Breast epithelium (tissue), 4 donors: ENCODE measurements at regions of chrX and their contacts with region 1.

Region 1: DNA sequence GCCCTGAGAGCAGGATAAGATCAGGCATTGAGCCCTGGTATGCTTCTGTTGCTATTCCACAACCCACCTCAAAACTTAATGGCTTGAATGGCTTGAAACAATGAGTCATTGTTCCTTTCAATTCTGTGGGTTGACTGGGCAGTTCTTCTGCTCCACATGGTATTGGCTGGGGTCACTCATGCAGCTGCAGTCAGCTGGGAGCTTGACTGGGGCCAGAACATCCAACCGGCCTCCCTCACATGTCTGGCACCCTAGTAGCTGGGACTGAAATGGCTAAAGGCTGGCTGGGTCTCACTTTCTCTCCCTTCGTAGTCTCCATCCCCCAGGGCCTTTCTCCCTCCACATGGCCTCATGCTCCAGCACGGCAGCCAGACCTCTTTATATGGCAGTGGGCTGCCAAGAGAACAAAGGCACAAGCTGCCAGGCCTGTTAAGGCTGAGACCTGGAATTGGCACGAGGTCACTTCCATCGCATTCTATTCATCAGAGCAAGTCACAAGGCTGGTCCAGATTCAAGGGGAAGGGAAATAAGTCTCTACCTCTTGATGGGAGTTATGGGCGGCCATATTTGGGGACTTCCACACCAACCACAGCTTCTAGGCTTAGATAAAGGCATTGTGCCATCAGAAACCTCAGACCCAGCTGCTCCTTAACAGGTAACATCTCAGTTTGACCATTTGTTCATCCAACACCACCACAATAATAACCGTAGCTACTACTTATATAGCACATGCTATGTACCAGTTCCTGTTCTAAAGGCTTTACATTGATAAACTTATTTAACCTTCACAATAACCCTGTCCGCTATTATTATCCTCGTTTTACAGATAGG is 159.7 kb upstream of the ATP6AP2 start:
- DNase-seq: peak in 1 of 2 donors; percentile 61
- H3K4me3 ChIP-seq: no peak overlapping the region
- H3K27ac ChIP-seq: peak overlapping the region; percentile 66 to 76
- H3K4me1 ChIP-seq: no peaks in the 10 kb centered on the region
- H3K27me3 ChIP-seq: peaks cover 0 to 35% of the 10 kb centered on the region in 2 donors
- CTCF ChIP-seq: peak in 1 of 3 donors; percentile 11
- POLR2A ChIP-seq: no peak

Region 2: DNA sequence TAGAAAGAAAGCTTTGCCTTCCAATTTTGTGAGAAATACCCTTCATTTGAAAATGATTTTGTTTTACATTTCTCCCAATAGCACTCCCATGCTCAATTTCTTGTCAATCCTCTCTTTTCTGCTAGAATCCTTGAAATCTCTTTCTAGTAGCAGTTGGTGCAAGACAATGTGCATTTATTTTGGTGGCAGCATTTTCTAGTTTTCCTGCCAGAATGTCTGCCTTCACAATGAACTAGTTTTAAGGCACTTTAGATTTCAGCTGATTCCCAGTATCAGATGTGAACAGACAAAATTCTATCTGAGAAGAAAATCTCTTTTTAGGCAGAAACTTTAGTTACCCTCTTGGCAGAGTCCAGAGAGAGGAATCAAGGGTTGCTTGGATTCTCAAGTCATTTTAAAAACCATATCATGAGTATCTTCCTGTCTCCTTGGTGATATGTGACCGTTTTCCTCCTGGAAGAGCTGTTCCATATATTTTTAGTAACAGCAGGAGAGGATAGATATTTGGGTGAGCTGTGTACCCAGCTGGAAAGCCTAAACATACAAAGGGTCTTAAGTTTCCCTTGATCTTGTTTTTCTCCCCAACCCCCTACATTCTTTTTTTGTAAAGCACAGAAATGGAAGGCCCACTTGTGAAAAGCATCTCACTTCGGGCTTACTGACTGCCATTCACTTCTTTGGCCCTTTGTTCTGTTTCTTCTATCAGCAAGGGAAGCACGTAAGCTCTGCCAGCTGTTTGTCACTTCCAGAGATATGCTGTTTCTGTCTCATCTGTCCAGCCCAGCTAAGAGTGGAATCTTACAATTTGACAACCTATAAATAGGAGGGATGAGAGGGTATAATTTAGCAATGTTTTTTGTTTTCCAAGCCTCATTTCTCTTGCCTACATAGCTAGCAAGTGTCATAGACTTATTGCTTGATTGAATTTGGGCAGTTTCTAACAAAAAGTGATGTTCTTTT is 1821.0 kb before region 1 on chrX:
- intact Hi-C with region 1: no loop called
- DNase-seq: no peak
- H3K4me3 ChIP-seq: no peak overlapping the region
- H3K27ac ChIP-seq: no peak overlapping the region
- H3K4me1 ChIP-seq: no peaks in the 10 kb centered on the region
- H3K27me3 ChIP-seq: peaks cover 0 to 55% of the 10 kb centered on the region in 2 donors
- CTCF ChIP-seq: no peak
- POLR2A ChIP-seq: no peak

Region 3: GRCh38 chrX:40647307-40648197 is 226.4 kb after region 1 on chrX and contains the start of gene CXorf38:
- intact Hi-C with region 1: loop called (anchors 5 kb)
- DNase-seq: peak; percentile 84 to 89
- H3K4me3 ChIP-seq: peak within 1 kb of the TSS; percentile 86 to 88 (median 86)
- H3K27ac ChIP-seq: peak within 1 kb of the TSS; percentile 84 to 89
- H3K4me1 ChIP-seq: peaks cover 0 to 4% of the 10 kb centered on the region in 2 donors
- H3K27me3 ChIP-seq: peaks cover 0 to 6% of the 10 kb centered on the region in 2 donors
- CTCF ChIP-seq: no peak
- POLR2A ChIP-seq: no peak
- total RNA-seq, gene CXorf38: 16.7 to 23.9 (median 16.8) TPM